ENCODE measurements at regions of chr14 and their contacts with region 1.

Region 1: DNA sequence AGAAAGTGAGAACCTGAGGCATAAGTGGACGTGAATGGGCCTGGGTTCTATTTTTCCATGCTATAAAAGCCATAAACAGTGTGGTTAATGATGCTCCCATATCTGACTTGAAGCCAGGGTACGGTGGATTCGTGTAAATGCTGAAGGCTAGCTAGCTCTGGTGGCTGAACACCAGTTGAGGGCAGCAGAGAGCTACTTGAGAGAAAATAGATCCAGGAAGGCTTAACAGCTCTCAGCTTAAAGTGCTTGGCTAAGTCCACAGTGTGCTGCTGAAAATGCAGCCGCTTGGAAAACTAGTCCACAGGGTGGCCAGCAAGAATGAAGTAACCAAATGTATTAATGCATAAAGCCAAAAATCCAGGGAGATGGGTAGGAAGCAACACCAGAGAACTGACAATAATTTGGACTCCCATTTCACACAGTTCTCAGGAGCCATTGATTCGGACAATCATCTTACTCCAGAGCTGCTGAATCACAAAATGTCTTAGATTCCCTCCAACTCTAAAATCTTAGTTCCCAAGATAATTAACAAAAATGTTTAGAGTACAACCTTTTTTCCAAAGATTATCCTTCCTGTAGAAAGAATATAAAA is 15.0 kb upstream of the FOXG1 start:
- DNase-seq: peak in 1 of 2 donors; percentile 23
- ATAC-seq: peak; percentile 66

Region 2: DNA sequence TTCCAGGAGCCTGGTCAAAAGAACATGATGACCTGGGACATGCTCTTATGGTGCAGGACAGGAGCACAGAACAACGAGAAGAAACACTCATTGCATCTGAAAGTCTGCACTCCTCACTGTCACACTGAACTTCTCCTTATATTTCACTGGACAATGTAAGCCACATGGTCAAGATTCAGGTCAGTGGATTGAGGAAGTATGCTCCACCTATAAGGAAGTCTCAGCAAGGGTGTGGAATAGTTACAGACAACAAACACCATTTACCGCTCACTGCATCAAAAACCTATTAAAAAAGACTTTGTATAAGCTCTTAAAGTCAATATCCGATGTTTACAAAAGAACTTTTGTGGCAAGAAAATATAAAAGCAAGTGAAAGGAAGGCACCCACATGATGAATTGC is 138.0 kb before region 1 on chr14:
- intact Hi-C with region 1: no loop called
- DNase-seq: no peak
- ATAC-seq: peak; percentile 94

Region 3: DNA sequence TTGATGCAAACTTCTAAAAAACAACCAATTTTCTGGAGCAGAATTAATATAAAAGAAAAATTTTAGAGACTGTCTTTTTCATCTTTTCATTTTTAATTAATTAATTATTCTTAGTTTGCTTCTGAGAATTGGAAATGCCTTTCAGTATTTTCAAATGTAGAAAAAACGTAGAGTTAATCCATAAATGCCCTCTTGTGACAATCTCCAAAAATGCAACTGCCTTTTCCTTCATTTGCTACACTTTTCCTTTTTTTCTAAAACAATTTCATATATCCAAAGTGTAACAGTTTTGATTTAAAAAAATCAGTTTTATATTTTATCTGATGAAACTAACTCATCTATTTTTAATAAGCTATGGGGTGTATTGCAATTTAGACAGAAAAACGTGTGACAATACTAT is 766.8 kb after region 1 on chr14:
- intact Hi-C with region 1: loop called in 1 of 2 experiments (anchors 10 kb)
- DNase-seq: no peak
- ATAC-seq: no peak

Region 4: GRCh38 chr14:30214461-30215090 is 1463.0 kb after region 1 on chr14:
- intact Hi-C with region 1: loop called in 1 of 2 experiments (anchors 10 kb)
- DNase-seq: no peak
- ATAC-seq: no peak

Region 5: DNA sequence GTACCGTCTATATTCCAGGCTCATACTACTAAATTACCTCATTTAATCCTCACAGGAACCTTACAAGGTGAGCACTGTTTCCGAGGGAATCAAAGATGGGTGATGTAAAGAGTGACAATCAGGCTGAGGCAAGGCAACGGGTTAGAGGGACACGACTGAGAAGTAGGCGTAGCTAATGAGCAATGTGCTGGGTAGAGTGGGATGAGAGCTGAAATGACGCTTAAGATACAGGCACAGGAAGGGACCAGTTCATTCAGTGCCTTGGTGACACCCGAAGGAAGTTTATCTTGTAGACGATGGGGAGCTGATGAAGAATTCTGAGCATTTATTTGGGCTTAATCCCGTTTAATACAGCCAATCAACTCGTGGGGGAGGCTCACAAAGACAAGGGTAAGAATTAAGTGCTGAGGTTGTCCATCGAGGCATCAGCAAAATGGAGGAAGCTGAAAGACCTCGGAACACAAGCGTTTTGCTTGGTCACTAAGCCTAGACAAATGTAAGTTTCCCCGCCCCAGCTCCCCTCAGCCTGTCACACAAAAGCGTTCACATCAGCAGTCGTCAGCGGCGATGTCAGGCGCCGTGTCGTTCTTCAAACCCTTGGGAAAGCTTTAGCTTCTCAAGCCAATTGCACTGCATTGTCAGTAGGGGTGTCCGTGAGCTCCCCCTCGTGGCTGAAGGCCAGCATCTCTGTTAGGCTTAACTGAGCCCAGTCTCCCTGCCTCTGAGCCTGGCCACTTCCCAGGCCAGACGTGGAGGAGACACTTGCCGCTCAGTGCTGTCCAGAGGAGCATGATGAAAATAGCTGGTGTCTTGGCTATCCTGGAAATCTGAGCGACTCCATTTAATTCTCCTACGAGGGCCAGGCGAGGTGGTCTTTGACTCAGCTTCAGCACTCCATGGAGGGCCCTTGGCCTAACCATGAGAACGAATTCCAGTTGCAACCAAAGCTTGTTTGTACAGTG is 1518.9 kb after region 1 on chr14:
- intact Hi-C with region 1: loop called in 1 of 2 experiments (anchors 5 kb)
- DNase-seq: peak; percentile 52 to 77
- ATAC-seq: peak; percentile 93